ENCODE measurements at regions of chr4 and their contacts with region 1.

Region 1: GRCh38 chr4:40489961-40490360 is 139.7 kb downstream of the RBM47 start:
- DNase-seq: no peak
- H3K4me3 Mint-ChIP-seq: no peak overlapping the region
- H3K27ac Mint-ChIP-seq: no peak overlapping the region
- H3K4me1 Mint-ChIP-seq: peaks cover 12% of the 10 kb centered on the region
- H3K27me3 Mint-ChIP-seq: no peaks in the 10 kb centered on the region
- CTCF ChIP-seq: no peak

Region 2: GRCh38 chr4:40065010-40065409 is 425.0 kb before region 1 on chr4:
- CTCF ChIA-PET with region 1: no interaction called
- POLR2A ChIA-PET with region 1: no interaction called
- intact Hi-C with region 1: no loop called
- DNase-seq: no peak
- H3K4me3 Mint-ChIP-seq: no peak overlapping the region
- H3K27ac Mint-ChIP-seq: no peak overlapping the region
- H3K4me1 Mint-ChIP-seq: no peaks in the 10 kb centered on the region
- H3K27me3 Mint-ChIP-seq: no peaks in the 10 kb centered on the region
- CTCF ChIP-seq: no peak

Region 3: GRCh38 chr4:40409835-40410234 is 80.1 kb before region 1 on chr4:
- CTCF ChIA-PET with region 1: no interaction called
- POLR2A ChIA-PET with region 1: no interaction called
- intact Hi-C with region 1: no loop called
- DNase-seq: peak; percentile 30
- H3K4me3 Mint-ChIP-seq: no peak overlapping the region
- H3K27ac Mint-ChIP-seq: no peak overlapping the region
- H3K4me1 Mint-ChIP-seq: no peaks in the 10 kb centered on the region
- H3K27me3 Mint-ChIP-seq: no peaks in the 10 kb centered on the region
- CTCF ChIP-seq: no peak

Region 4: GRCh38 chr4:40515398-40516293 is 25.7 kb after region 1 on chr4:
- CTCF ChIA-PET with region 1: no interaction called
- POLR2A ChIA-PET with region 1: no interaction called
- intact Hi-C with region 1: loop called (anchors 1 kb)
- DNase-seq: peak; percentile 12
- H3K4me3 Mint-ChIP-seq: no peak overlapping the region
- H3K27ac Mint-ChIP-seq: no peak overlapping the region
- H3K4me1 Mint-ChIP-seq: peaks cover 18% of the 10 kb centered on the region
- H3K27me3 Mint-ChIP-seq: no peaks in the 10 kb centered on the region
- CTCF ChIP-seq: no peak

Region 5: DNA sequence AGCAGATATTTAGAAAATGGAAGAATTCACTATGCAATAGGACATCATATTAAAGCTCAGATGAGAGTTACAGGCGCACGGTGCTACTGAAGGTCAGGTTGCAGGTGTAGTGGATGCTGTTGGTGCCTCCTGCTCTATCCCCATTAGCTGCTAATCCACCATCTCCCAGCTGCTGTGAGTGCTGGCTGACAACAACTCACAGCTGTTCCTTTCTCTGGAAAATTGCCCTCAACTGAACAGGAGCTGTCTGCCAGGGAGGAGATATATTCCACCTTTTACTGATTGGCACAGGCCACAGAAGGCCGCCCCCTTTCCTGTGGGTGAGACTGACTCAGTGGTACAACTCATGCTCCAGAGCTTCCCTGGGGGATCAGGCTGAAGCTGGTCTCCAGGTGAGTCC is 815.5 kb after region 1 on chr4:
- CTCF ChIA-PET with region 1: no interaction called
- POLR2A ChIA-PET with region 1: no interaction called
- intact Hi-C with region 1: no loop called
- DNase-seq: no peak
- H3K4me3 Mint-ChIP-seq: no peak overlapping the region
- H3K27ac Mint-ChIP-seq: no peak overlapping the region
- H3K4me1 Mint-ChIP-seq: peaks cover 5% of the 10 kb centered on the region
- H3K27me3 Mint-ChIP-seq: no peaks in the 10 kb centered on the region
- CTCF ChIP-seq: no peak

Measured in MCF 10A (cell line).